CD8-positive, alpha-beta T cell (primary cell): ENCODE measurements at regions of chr1 and their contacts with region 1.

Region 1: DNA sequence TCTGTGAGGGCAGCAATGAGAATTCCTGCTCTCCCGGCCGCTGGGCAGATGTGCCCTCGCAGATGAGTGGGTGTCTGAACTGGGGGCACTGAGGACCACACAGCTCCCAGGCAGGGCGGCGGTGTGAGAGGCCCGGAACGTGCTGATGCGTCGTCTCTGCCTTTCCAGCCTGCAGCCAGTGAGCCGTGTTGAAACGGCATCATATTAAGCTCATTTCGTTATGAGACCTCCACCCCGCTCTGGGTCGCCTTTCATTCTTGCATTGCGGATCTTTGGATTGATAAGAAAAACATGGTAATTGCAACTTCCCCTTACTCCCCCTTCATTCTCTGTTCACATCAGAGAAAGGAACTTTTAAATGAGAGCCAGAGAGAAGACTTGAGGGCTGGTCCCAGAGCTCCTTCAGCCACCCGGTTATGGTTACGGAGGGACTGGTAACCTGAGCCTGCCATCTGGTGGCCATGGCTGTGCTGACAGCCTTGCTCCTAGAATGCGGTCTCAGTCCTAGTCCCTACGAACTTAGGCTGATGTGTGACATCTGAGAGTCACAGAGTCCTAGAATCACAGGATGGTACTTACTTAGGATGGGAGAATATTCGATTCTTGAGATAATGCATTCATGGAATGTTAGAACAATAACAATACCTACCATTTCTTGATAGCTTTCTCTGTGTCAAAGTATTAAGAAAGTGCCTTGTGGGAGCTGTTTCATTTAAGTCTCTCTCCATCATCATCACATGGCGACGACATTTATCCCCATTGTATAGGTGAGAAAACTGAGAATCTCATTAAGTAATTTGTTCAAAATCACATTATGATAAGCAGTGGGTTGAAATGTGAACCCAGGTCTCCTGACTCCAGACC is 271.0 kb downstream of the TRABD2B start:
- DNase-seq: peak; percentile 24 to 71 (median 59)
- ATAC-seq: peak; percentile 71
- H3K4me3 ChIP-seq: no peak overlapping the region
- H3K4me3 Mint-ChIP-seq: peak overlapping the region; percentile 62
- H3K27ac ChIP-seq: no peak overlapping the region
- H3K27ac Mint-ChIP-seq: no peak overlapping the region
- H3K4me1 ChIP-seq: no peaks in the 10 kb centered on the region
- H3K4me1 Mint-ChIP-seq: peaks cover 11% of the 10 kb centered on the region
- H3K27me3 ChIP-seq: peaks cover 2 to 4% of the 10 kb centered on the region in 2 experiments
- H3K27me3 Mint-ChIP-seq: peaks cover 31% of the 10 kb centered on the region
- CTCF ChIP-seq: peak; percentile 71

Region 2: DNA sequence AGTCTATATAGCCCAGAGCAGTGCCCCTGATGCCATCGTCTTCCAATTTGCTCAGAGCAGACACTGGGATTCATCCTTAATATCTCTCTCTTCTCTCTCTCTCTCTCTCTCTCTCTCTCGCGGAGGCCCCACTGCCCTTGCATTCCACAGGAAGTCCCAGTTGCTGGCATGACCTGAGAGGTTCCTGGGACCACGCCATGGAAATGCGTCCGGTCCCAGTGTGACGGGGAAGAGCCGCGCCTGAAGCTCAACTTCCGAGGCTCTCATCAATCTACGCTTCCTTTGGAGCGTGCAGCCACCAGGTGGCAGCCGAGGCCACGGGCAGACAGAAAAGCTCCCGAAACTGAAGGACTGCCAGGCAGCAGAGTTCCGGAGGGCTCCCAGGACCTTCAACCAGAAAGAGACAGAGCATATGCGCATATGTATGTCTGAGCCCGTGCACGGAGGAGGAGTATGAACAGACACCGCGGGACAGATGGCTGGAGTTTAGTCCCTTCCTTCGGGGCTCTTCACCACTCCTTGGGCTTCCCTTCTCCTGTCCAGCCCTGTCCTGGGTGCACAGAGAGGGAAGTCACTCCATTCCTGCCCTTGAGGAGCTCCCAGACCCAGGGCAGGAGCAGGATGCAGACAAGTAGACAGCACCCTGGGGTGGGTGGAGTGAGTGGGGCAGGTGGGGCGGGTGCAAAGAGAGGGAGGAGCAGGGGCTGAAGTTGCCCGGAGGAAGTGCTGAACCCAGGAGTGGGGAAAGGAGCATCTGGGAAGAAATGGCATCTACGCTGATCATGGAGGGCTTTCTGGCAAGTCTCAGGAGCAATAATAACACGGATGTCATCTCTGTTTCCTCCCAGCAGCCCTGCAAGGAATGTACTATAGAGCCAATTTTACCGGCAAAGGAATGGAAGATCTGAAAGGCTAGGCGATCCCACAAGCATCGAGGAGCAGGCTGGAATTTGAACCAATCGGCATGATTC is 546.9 kb before region 1 on chr1:
- CTCF ChIA-PET with region 1: interaction called, 12 read pairs
- POLR2A ChIA-PET with region 1: no interaction called
- intact Hi-C with region 1: loop called in 1 of 2 experiments (anchors 5 kb)
- DNase-seq: peak; percentile 33 to 75 (median 59)
- ATAC-seq: peak; percentile 69
- H3K4me3 ChIP-seq: peak overlapping the region; percentile 18 to 34
- H3K4me3 Mint-ChIP-seq: peak overlapping the region; percentile 72
- H3K27ac ChIP-seq: no peak overlapping the region
- H3K27ac Mint-ChIP-seq: no peak overlapping the region
- H3K4me1 ChIP-seq: peaks cover 7% of the 10 kb centered on the region
- H3K4me1 Mint-ChIP-seq: peaks cover 14% of the 10 kb centered on the region
- H3K27me3 ChIP-seq: peaks cover 0 to 10% of the 10 kb centered on the region in 2 experiments
- H3K27me3 Mint-ChIP-seq: peaks cover 33% of the 10 kb centered on the region
- CTCF ChIP-seq: peak; percentile 79

Region 3: GRCh38 chr1:47388891-47389238 is 337.4 kb before region 1 on chr1:
- CTCF ChIA-PET with region 1: interaction called, 5 read pairs
- POLR2A ChIA-PET with region 1: no interaction called
- intact Hi-C with region 1: loop called (anchors 1 kb)
- DNase-seq: peak in 7 of 9 experiments; percentile 3 to 55 (median 25)
- ATAC-seq: no peak
- H3K4me3 ChIP-seq: no peak overlapping the region
- H3K4me3 Mint-ChIP-seq: no peak overlapping the region
- H3K27ac ChIP-seq: no peak overlapping the region
- H3K27ac Mint-ChIP-seq: no peak overlapping the region
- H3K4me1 ChIP-seq: no peaks in the 10 kb centered on the region
- H3K4me1 Mint-ChIP-seq: no peaks in the 10 kb centered on the region
- H3K27me3 ChIP-seq: no peaks in the 10 kb centered on the region
- H3K27me3 Mint-ChIP-seq: peaks cover 2% of the 10 kb centered on the region
- CTCF ChIP-seq: peak; percentile 45

Region 4: DNA sequence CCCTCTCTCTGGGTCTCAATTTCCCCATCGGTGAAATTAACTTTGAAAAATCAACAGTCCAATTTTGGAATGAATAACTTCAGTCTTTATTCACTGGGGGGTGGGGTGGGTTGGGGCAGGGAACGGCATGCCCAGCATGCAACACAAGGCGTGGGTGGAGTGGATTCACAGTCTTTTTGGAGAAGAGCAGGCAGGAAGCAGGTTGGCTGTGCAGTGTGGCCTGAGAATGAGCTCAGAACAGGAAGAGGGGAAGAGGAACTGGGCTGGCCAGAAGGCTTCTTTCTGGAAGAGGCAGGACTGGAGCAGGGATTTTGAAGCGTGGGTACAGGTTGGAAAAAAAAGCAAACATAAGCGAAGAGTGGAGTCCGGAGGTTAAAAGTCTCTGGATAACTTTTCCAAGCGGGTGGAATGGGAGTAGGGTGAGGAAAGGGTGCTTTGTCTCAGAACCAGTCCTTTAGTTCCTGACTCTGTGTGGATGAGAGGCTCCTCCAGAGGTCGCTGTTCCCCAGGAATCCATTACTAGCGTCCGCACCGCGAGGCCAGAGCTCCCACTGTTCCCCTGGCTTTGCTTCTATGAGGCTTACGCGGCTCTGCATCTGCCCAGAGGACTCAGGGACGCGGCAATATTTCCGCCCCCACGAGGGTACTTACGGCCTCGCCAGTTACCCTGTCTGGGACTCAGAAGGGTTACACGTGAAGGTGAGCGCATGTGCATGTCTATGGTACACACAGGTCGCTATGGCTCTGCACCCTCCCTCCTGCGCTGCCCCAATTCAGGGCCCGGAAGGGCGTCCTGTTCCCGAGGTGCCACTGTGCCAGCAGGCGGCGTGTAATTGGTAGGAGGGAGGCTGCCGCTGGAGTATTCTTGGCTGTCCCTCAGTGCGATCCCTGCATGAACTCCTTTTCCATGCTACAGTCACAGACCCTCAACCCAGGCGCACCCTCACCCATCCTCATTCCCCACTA is 293.9 kb before region 1 on chr1:
- CTCF ChIA-PET with region 1: interaction called, 17 read pairs
- POLR2A ChIA-PET with region 1: interaction called, 3 read pairs
- intact Hi-C with region 1: loop called (anchors 1 kb)
- DNase-seq: peak; percentile 21 to 73 (median 62)
- ATAC-seq: peak; percentile 30
- H3K4me3 ChIP-seq: peak overlapping the region; percentile 9 to 34
- H3K4me3 Mint-ChIP-seq: peak overlapping the region; percentile 63
- H3K27ac ChIP-seq: no peak overlapping the region
- H3K27ac Mint-ChIP-seq: no peak overlapping the region
- H3K4me1 ChIP-seq: peaks cover 40% of the 10 kb centered on the region
- H3K4me1 Mint-ChIP-seq: peaks cover 40% of the 10 kb centered on the region
- H3K27me3 ChIP-seq: peaks cover 3 to 18% of the 10 kb centered on the region in 2 experiments
- H3K27me3 Mint-ChIP-seq: peaks cover 33% of the 10 kb centered on the region
- CTCF ChIP-seq: peak; percentile 49

Region 5: DNA sequence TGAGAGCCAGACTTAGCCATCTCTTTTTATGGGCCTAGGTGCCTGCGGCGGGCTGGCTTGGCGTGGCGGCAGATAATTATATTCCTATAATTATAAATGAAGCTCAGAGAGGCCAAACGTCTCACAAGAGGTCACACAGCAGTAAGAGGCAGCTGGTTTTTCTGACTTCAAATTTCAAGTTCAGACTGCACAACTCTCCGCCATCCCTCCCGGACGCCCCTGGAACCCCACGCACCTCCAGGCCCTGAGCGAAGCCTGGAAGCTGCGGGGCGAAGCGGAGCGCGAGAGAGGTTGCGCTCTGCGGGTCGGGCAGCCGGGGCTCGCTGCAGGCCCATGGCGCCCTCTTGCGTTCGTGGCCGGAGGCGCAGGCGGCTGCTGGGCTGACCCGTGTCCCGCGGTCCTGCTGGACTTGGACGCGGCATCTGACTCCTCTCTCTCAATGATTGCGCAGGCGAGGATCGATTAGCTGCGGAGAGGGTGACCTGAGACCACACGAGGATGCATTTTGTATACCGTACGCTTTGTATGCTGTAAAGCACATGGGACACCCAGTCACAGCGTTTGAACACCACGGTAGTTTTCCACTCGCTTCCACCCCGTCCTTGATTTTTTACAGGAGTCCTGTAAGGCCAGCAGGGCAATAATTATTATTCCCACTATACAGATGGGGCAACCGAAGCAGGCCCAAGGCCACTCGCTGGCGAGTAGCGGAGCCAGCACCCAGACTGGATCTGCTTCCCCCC is 15.7 kb before region 1 on chr1:
- CTCF ChIA-PET with region 1: interaction called, 18 read pairs
- POLR2A ChIA-PET with region 1: no interaction called
- intact Hi-C with region 1: no loop called
- DNase-seq: peak; percentile 35 to 78 (median 62)
- ATAC-seq: peak; percentile 71
- H3K4me3 ChIP-seq: peak overlapping the region in 1 of 2 experiments; percentile 33
- H3K4me3 Mint-ChIP-seq: peak overlapping the region; percentile 32
- H3K27ac ChIP-seq: no peak overlapping the region
- H3K27ac Mint-ChIP-seq: no peak overlapping the region
- H3K4me1 ChIP-seq: peaks cover 21% of the 10 kb centered on the region
- H3K4me1 Mint-ChIP-seq: peaks cover 11% of the 10 kb centered on the region
- H3K27me3 ChIP-seq: peaks cover 16 to 42% of the 10 kb centered on the region in 2 experiments
- H3K27me3 Mint-ChIP-seq: peaks cover 67% of the 10 kb centered on the region
- CTCF ChIP-seq: peak; percentile 84